ENCODE measurements at regions of chr1 and their contacts with region 1.

Region 1: DNA sequence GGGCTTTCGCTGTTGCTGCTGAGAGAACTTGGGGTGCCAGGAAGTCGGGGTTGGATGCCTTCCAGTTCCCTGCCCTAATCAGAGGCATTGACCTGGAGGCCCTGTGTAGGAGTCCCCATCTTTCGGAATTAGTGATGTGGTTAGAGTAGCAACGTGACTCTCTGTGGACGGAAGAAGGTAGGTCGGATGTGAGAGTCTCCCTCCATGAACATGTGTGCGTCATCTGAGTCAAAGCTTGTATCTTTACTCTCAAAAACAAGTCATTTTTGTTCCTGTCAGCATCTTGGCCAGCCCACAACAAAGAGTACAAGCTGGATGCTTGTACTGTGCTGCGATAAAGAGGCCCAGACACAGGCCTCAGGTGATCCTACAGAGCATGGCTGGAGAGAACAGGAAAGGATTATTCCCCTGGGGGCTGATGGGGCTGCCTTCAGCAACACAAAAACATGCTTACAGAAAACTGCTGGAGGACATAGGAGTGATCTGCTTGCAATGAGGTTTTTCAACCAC is 31.0 kb upstream of the IL10 start:
- DNase-seq: peak; percentile 59 to 98 (median 74)
- ATAC-seq: peak; percentile 91
- H3K4me3 ChIP-seq: no peak overlapping the region
- H3K4me3 Mint-ChIP-seq: peak overlapping the region; percentile 40
- H3K27ac ChIP-seq: peak overlapping the region; percentile 51 to 83
- H3K27ac Mint-ChIP-seq: peak overlapping the region; percentile 96
- H3K4me1 ChIP-seq: peaks cover 46% of the 10 kb centered on the region
- H3K4me1 Mint-ChIP-seq: peaks cover 71% of the 10 kb centered on the region
- H3K27me3 ChIP-seq: no peaks in the 10 kb centered on the region
- H3K27me3 Mint-ChIP-seq: no peaks in the 10 kb centered on the region
- CTCF ChIP-seq: no peak

Region 2: DNA sequence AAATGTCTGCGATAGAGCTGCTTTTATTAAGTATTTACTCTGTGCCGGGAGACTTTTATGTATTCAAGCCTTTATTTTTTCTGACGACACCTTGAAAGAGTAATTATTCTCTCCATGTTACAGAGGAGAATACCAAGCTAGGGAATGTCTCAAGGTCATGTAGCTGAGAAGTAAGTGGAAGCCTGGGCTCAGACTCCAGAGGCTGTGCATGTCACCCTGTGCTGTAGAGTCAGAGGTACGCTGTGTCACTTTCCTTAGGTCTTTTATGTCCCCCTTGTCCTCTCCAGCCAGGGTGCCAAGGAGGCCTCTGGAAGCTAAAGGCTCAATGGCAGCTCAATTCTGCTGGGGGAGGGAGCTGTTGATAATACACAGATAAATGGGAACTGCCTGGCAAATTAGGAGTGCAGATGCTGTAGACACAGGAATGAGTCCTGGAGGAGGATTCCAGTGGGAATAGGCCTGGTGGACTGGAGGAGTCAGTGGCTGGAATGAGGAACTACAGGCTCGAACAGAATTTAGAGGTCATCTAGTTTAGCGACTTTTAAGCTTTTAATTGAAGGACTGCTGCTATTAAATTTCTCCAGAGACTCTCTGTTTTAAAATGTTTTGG is 42.0 kb before region 1 on chr1:
- CTCF ChIA-PET with region 1: interaction called, 16 read pairs
- POLR2A ChIA-PET with region 1: interaction called, 18 read pairs
- intact Hi-C with region 1: loop called (anchors 1 kb)
- DNase-seq: no peak
- ATAC-seq: no peak
- H3K4me3 ChIP-seq: no peak overlapping the region
- H3K4me3 Mint-ChIP-seq: no peak overlapping the region
- H3K27ac ChIP-seq: no peak overlapping the region
- H3K27ac Mint-ChIP-seq: no peak overlapping the region
- H3K4me1 ChIP-seq: peaks cover 59% of the 10 kb centered on the region
- H3K4me1 Mint-ChIP-seq: peaks cover 33% of the 10 kb centered on the region
- H3K27me3 ChIP-seq: no peaks in the 10 kb centered on the region
- H3K27me3 Mint-ChIP-seq: no peaks in the 10 kb centered on the region
- CTCF ChIP-seq: no peak

Region 3: DNA sequence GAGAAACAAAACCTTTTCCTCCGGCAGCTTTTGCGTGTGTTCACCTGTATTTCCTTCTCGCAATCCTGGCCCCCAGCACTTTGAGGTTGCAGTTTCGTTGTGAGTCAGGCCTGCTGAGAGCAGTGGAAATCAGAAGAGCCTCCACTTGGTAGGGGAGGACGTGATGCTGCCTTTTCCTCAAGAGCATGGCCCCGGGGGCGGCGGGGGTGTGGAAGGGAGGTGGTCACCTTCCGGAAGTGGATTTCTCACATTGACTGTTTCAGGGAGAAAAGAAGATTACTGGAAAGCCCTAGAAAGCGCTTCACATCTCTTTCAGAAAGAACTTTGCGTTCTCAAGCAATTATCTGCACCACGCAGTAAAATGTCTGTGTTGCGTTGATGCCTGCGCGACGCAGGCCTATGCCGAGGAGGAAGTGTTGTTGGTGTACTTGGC is 18.8 kb before region 1 on chr1:
- CTCF ChIA-PET with region 1: interaction called, 4 read pairs
- POLR2A ChIA-PET with region 1: interaction called, 4 read pairs
- intact Hi-C with region 1: loop called in 1 of 2 experiments (anchors 2 kb)
- DNase-seq: peak in 8 of 9 experiments; percentile 43 to 78 (median 62)
- ATAC-seq: peak; percentile 88
- H3K4me3 ChIP-seq: no peak overlapping the region
- H3K4me3 Mint-ChIP-seq: peak overlapping the region; percentile 63
- H3K27ac ChIP-seq: no peak overlapping the region
- H3K27ac Mint-ChIP-seq: peak overlapping the region; percentile 86
- H3K4me1 ChIP-seq: peaks cover 56% of the 10 kb centered on the region
- H3K4me1 Mint-ChIP-seq: peaks cover 62% of the 10 kb centered on the region
- H3K27me3 ChIP-seq: no peaks in the 10 kb centered on the region
- H3K27me3 Mint-ChIP-seq: no peaks in the 10 kb centered on the region
- CTCF ChIP-seq: no peak